ENCODE measurements at regions of chr3 and their contacts with region 1.

Region 1: GRCh38 chr3:194344012-194344411 is 7.1 kb downstream of the CPN2 start:
- DNase-seq: no peak
- H3K4me3 ChIP-seq: no peak overlapping the region
- CTCF ChIP-seq: peak; percentile 92

Region 2: GRCh38 chr3:193780810-193781472 is 563.1 kb before region 1 on chr3:
- CTCF ChIA-PET with region 1: interaction called, 31 read pairs
- POLR2A ChIA-PET with region 1: no interaction called
- DNase-seq: no peak
- H3K4me3 ChIP-seq: no peak overlapping the region
- CTCF ChIP-seq: peak; percentile 74

Region 3: DNA sequence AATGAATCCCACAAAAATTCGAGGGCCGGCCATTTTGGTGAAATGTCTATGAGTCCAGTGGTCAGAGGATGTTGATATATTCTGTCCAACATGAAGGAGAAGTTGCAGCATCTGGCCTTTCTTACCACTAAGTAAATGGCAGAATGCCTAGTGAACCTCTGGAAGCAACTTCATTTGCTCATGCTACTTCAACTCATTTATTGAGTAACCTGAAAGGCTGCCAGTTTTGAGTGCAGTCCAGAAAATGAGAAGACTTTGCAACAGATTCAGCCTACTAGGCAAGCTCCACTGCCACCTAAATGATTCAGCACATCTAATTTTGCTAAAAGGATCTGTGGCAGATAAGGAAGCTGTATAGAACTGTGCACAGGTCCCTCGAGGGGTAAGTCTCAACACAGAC is 486.0 kb before region 1 on chr3:
- CTCF ChIA-PET with region 1: no interaction called
- POLR2A ChIA-PET with region 1: no interaction called
- DNase-seq: peak; percentile 71
- H3K4me3 ChIP-seq: no peak overlapping the region
- CTCF ChIP-seq: no peak

Region 4: DNA sequence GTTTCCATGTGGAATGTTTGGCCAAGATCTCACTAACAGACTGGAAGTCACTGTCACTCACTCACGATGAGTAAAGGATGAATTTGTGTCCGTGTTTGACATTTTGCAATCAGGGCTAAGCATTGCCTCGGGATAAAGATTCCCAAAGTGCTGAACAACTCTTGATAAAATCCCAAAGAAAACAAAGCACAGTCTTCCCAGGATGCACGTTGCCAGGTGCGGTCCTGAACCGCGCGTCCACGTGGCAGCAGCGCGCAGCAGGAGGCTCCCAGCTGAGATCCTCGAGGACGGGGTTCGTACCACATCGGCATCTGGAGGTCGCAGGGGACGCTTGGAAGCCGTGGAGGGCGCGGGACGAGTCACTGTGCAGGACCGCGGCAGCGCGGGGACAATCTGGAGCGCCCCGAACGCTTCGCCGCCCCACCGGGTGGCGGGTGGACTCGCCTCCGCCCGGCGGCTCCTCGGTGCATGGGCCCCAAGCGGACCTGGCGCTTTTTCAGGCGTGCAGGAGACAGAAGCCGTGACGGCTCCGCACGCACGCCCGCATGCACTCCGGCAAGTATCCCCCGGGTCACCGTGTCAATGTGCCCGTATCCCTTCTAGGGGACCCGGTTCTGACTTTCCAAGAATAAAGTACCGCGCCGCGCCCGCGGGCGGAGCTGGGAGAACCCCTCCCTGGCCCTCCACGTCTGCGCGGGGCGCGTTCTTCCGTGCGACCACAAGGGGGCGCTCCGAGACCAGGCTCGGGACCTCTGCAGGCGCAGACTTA is 10.6 kb before region 1 on chr3:
- CTCF ChIA-PET with region 1: interaction called, 90 read pairs
- POLR2A ChIA-PET with region 1: no interaction called
- DNase-seq: no peak
- H3K4me3 ChIP-seq: peak overlapping the region; percentile 68
- CTCF ChIP-seq: peak; percentile 92

Region 5: DNA sequence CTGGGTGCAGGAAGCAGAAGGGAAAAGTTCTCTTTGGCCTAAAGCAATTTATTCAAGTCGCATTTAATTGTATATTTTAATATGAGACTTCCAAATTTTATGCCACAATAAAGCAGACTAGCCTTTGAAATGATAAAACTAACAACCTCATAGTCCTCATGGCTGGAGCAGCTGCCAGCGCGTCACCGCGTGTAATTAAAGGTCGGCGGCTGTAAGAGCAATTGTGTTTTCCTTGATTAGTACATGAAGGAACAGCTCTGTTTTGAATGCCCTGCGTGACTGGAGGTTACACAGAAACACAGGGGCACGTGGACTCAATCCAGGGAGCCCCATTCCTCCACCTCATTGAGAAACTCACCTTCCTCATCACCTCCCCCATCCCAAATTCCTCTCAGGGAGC is 35.6 kb after region 1 on chr3:
- CTCF ChIA-PET with region 1: interaction called, 16 read pairs
- POLR2A ChIA-PET with region 1: no interaction called
- DNase-seq: no peak
- H3K4me3 ChIP-seq: no peak overlapping the region
- CTCF ChIP-seq: no peak

Region 6: GRCh38 chr3:194395778-194396547 is 52.0 kb after region 1 on chr3:
- CTCF ChIA-PET with region 1: interaction called, 79 read pairs
- POLR2A ChIA-PET with region 1: interaction called, 3 read pairs
- DNase-seq: no peak
- H3K4me3 ChIP-seq: no peak overlapping the region
- CTCF ChIP-seq: no peak

Region 7: GRCh38 chr3:194431553-194431952 is 87.5 kb after region 1 on chr3:
- CTCF ChIA-PET with region 1: interaction called, 12 read pairs
- POLR2A ChIA-PET with region 1: no interaction called
- DNase-seq: no peak
- H3K4me3 ChIP-seq: no peak overlapping the region
- CTCF ChIP-seq: no peak

Region 8: DNA sequence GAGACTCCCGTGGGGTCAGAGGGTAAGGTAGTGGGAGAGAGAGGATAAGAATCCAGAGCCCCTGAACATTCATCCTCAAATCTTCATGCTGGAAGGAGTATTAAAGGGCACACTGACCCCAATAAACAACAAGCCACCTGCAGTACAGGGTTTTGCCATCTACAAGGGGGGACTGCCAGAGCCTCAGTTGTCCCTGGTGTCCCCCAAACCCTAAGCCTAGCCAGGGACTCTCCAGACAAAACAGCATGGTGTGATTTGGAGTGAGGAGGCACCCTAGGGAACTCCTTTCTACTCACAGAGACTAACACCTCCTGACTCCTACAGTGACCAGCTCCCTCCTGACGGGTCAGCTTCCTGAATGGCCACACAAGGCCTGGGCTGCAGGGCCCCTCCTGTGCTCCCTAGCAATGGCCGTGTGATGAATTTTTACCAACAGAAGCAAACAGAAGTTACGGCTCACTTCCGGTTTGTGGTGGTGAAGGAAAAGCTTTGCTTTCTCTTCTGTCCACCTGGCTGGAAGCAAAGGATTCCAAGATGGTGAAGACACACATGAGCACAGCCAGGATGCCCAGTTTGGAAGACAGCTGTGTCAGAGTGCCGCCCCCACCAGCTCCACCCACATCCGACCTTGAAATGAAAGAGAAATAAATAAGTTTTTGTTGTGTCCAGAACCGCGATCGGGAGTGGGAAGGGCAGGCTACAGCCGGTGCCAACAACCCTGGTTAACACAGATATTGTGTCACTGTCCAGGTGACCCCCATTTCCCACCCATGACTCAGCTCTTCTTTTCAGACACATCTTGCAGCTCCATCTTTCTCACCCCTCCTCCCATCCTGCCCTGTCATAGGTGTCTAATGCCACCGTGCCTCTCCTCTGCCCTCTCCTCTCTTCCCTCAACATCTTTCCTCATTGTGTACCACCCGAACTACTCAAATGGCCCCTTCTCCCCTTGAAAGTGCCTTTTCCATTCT is 212.4 kb after region 1 on chr3:
- CTCF ChIA-PET with region 1: no interaction called
- POLR2A ChIA-PET with region 1: no interaction called
- DNase-seq: no peak
- H3K4me3 ChIP-seq: no peak overlapping the region
- CTCF ChIP-seq: no peak

Measured in AG04449 (cell line).